GM12878 (cell line): ENCODE measurements at regions of chr4 and their contacts with region 1.

Region 1: GRCh38 chr4:13654158-13654797 is 26.8 kb upstream of the BOD1L1 start:
- DNase-seq: no peak
- ATAC-seq: peak; percentile 98
- H3K4me3 ChIP-seq: peak overlapping the region; percentile 64
- H3K27ac ChIP-seq: no peak overlapping the region
- H3K4me1 ChIP-seq: no peaks in the 10 kb centered on the region
- H3K27me3 ChIP-seq: no peaks in the 10 kb centered on the region; a peak in 1 of 4 replicates
- CTCF ChIP-seq: peak; percentile 82 to 96 (median 86)
- EP300 ChIP-seq: no peak
- POLR2A ChIP-seq: no peak
- RAD21 ChIP-seq: peak; percentile 71

Region 2: GRCh38 chr4:12852338-12853307 is 801.7 kb before region 1 on chr4:
- CTCF ChIA-PET with region 1: interaction called, 10 read pairs
- POLR2A ChIA-PET with region 1: no interaction called
- RAD21 ChIA-PET with region 1: interaction called, 3 read pairs
- SMC1A ChIA-PET with region 1: interaction called, 6 read pairs
- in situ Hi-C with region 1: no loop called
- intact Hi-C with region 1: loop called (anchors 5 kb)
- DNase-seq: no peak
- ATAC-seq: peak; percentile 84
- H3K4me3 ChIP-seq: no peak overlapping the region
- H3K27ac ChIP-seq: no peak overlapping the region
- H3K4me1 ChIP-seq: no peaks in the 10 kb centered on the region
- H3K27me3 ChIP-seq: no peaks in the 10 kb centered on the region
- CTCF ChIP-seq: peak; percentile 32 to 62 (median 48); a peak in 5 of 6 replicates
- EP300 ChIP-seq: no peak
- POLR2A ChIP-seq: no peak
- RAD21 ChIP-seq: peak; percentile 65

Region 3: GRCh38 chr4:13522282-13523104 is 131.8 kb before region 1 on chr4:
- CTCF ChIA-PET with region 1: no interaction called
- POLR2A ChIA-PET with region 1: no interaction called
- RAD21 ChIA-PET with region 1: no interaction called
- SMC1A ChIA-PET with region 1: no interaction called
- in situ Hi-C with region 1: no loop called
- intact Hi-C with region 1: no loop called
- DNase-seq: no peak
- ATAC-seq: peak; percentile 50; the same call in 2 of the 3 replicates
- H3K4me3 ChIP-seq: no peak overlapping the region
- H3K27ac ChIP-seq: no peak overlapping the region
- H3K4me1 ChIP-seq: peaks cover 3% of the 10 kb centered on the region; the same call in 1 of the 2 replicates
- H3K27me3 ChIP-seq: peaks cover 8 to 13% of the 10 kb centered on the region in 2 experiments
- CTCF ChIP-seq: no peak
- EP300 ChIP-seq: no peak
- POLR2A ChIP-seq: no peak
- RAD21 ChIP-seq: no peak

Region 4: GRCh38 chr4:13783800-13784411 is 129.6 kb after region 1 on chr4:
- CTCF ChIA-PET with region 1: interaction called, 3 read pairs
- POLR2A ChIA-PET with region 1: no interaction called
- RAD21 ChIA-PET with region 1: no interaction called
- SMC1A ChIA-PET with region 1: interaction called, 3 read pairs
- in situ Hi-C with region 1: no loop called
- intact Hi-C with region 1: loop called (anchors 10 kb)
- DNase-seq: peak; percentile 13
- ATAC-seq: peak; percentile 93
- H3K4me3 ChIP-seq: no peak overlapping the region
- H3K27ac ChIP-seq: no peak overlapping the region
- H3K4me1 ChIP-seq: no peaks in the 10 kb centered on the region
- H3K27me3 ChIP-seq: no peaks in the 10 kb centered on the region
- CTCF ChIP-seq: no peak
- EP300 ChIP-seq: peak in 1 of 2 experiments; percentile 17; a peak in 1 of 4 replicates
- POLR2A ChIP-seq: no peak
- RAD21 ChIP-seq: no peak

Region 5: DNA sequence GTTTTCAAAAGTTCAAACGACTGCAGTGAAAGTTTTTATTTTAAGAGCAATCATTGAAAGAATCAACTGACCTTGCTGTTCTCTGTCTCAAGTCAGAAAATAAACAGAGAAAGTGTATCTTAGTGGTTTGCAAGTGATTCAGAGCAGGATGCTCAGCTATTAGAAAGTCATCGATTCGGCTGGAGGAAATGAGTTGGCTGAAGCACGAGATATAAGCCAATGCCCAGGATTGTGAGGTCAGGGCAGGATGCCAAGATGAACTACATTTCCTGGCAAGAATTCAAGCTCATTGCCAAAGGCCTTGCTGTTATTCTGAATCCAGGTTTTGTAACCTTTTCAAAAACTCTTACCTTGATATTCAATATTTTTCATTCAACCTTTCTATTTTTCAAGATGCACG is 514.6 kb after region 1 on chr4:
- CTCF ChIA-PET with region 1: no interaction called
- POLR2A ChIA-PET with region 1: no interaction called
- RAD21 ChIA-PET with region 1: no interaction called
- SMC1A ChIA-PET with region 1: no interaction called
- in situ Hi-C with region 1: no loop called
- intact Hi-C with region 1: loop called (anchors 10 kb)
- DNase-seq: peak; percentile 53
- ATAC-seq: peak; percentile 67
- H3K4me3 ChIP-seq: no peak overlapping the region
- H3K27ac ChIP-seq: no peak overlapping the region
- H3K4me1 ChIP-seq: peaks cover 10% of the 10 kb centered on the region
- H3K27me3 ChIP-seq: no peaks in the 10 kb centered on the region
- CTCF ChIP-seq: no peak
- EP300 ChIP-seq: peak in 1 of 2 experiments; percentile 11; a peak in 1 of 4 replicates
- POLR2A ChIP-seq: no peak
- RAD21 ChIP-seq: no peak

Region 6: GRCh38 chr4:15001869-15002658 is 1347.8 kb after region 1 on chr4 and contains the start of gene CPEB2:
- CTCF ChIA-PET with region 1: interaction called, 3 read pairs
- POLR2A ChIA-PET with region 1: no interaction called
- RAD21 ChIA-PET with region 1: no interaction called
- SMC1A ChIA-PET with region 1: interaction called, 3 read pairs
- in situ Hi-C with region 1: loop called (anchors 10 kb)
- intact Hi-C with region 1: loop called (anchors 5 kb)
- DNase-seq: peak; percentile 81
- ATAC-seq: peak; percentile 80
- H3K4me3 ChIP-seq: peak within 1 kb of the TSS; percentile 93
- H3K27ac ChIP-seq: peak within 1 kb of the TSS; percentile 96
- H3K4me1 ChIP-seq: no peaks in the 10 kb centered on the region
- H3K27me3 ChIP-seq: no peaks in the 10 kb centered on the region
- CTCF ChIP-seq: no peak
- EP300 ChIP-seq: 0 out of 4 replicates have a peak, but pooled peaks of 1 of the 2 experiments have one; percentile 3
- POLR2A ChIP-seq: peak; percentile 92
- RAD21 ChIP-seq: peak; percentile 8; the same call in 1 of the 2 replicates
- polyA plus RNA-seq, gene CPEB2: 0.84 to 1.4 TPM

Region 7: DNA sequence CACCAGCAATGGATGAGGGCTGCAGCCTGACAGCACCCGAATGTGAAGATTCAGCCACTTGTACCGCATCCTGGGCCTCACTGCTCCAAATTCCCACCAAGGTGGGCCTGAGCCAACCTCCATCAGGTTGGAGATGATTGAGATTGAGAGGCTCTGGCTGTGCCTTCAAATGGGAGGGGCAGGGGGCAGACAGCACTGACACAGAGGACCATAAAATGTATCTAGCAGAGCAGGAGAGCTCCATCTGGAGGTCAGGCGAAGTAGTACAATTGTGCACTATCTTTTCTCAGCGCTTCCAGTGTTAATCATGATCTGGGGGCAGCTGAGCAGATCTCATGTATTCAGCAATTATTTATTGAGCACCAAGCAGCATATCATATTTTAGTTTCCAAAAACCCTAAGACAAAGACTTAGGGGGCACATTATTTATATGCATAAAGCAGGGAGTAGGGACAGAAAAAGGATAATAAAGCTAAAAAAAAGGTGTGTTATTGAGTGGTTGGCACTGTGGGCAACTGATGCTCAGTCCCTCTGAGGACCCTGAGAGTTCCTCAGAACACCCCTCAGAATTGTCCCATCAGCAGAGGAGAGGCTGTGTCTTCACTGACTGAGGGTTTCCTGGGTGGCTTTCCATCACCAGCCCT is 1742.0 kb after region 1 on chr4:
- CTCF ChIA-PET with region 1: interaction called, 4 read pairs
- POLR2A ChIA-PET with region 1: no interaction called
- RAD21 ChIA-PET with region 1: no interaction called
- SMC1A ChIA-PET with region 1: no interaction called
- in situ Hi-C with region 1: no loop called
- intact Hi-C with region 1: loop called (anchors 2 kb)
- DNase-seq: no peak
- ATAC-seq: peak; percentile 95
- H3K4me3 ChIP-seq: no peak overlapping the region
- H3K27ac ChIP-seq: no peak overlapping the region
- H3K4me1 ChIP-seq: peaks cover 8% of the 10 kb centered on the region
- H3K27me3 ChIP-seq: no peaks in the 10 kb centered on the region
- CTCF ChIP-seq: peak; percentile 78 to 82 (median 82)
- EP300 ChIP-seq: no peak
- POLR2A ChIP-seq: no peak
- RAD21 ChIP-seq: peak; percentile 74